ENCODE measurements at regions of chr20 and their contacts with region 1.

Region 1: GRCh38 chr20:6636209-6637159 is 131.0 kb upstream of the BMP2 start:
- DNase-seq: peak in 1 of 3 donors; percentile 61
- ATAC-seq: peak; percentile 89
- H3K4me3 ChIP-seq: no peak overlapping the region
- H3K4me1 ChIP-seq: peaks cover 13% of the 10 kb centered on the region
- CTCF ChIP-seq: peak; percentile 35

Region 2: DNA sequence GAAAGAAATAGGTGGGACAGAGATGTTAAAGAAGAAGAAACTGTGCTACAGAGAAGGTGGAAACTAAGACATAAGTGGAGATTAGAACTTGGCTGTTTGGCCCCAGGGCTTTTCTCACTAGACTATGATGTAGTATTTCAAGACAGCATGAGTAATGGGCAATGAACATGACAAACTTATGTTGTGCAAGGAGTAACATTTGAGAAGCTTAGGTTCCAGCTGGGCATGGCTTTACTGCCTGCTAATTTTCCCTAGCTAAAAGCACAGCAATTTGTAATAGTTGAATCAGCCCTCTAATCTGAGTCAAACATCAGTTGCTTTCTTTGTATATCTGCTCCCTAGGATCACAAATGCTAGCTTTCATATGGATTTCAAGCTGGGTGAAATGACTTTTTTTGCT is 163.3 kb before region 1 on chr20:
- intact Hi-C with region 1: no loop called
- DNase-seq: no peak
- ATAC-seq: no peak
- H3K4me3 ChIP-seq: no peak overlapping the region
- H3K4me1 ChIP-seq: no peaks in the 10 kb centered on the region
- CTCF ChIP-seq: no peak

Region 3: GRCh38 chr20:6767536-6768227 is 131.2 kb after region 1 on chr20 and contains the start of gene BMP2:
- intact Hi-C with region 1: loop called in 1 of 2 experiments (anchors 5 kb)
- DNase-seq: peak; percentile 61 to 84 (median 70)
- ATAC-seq: peak; percentile 71
- H3K4me3 ChIP-seq: peak within 1 kb of the TSS; percentile 84
- H3K4me1 ChIP-seq: peaks cover 7% of the 10 kb centered on the region
- CTCF ChIP-seq: no peak
- total RNA-seq, gene BMP2: 22.5 to 64.5 (median 46.1) TPM

Region 4: DNA sequence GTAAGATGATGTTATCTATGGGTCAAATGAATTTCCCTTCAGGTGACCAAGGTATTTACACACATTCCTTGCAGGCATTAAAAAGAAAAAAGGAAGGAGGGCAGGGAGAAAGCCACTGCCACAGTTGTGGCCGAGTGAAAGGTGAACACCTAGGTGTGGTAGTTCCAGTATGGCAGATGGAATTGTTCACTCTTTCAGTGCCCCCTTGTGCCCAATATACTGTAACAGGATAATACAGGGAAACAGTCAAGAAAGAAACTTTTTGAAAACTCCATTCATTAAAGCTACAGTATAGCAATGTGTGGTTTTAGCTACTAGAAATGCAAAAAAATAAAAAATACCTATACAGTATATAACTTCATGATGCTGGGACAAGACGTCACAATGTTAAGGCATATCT is 183.1 kb after region 1 on chr20:
- intact Hi-C with region 1: loop called in 1 of 2 experiments (anchors 5 kb)
- DNase-seq: peak in 1 of 3 donors; percentile 64
- ATAC-seq: peak; percentile 90
- H3K4me3 ChIP-seq: no peak overlapping the region
- H3K4me1 ChIP-seq: no peaks in the 10 kb centered on the region
- CTCF ChIP-seq: no peak